ENCODE measurements at regions of chr11 and their contacts with region 1.

Region 1: DNA sequence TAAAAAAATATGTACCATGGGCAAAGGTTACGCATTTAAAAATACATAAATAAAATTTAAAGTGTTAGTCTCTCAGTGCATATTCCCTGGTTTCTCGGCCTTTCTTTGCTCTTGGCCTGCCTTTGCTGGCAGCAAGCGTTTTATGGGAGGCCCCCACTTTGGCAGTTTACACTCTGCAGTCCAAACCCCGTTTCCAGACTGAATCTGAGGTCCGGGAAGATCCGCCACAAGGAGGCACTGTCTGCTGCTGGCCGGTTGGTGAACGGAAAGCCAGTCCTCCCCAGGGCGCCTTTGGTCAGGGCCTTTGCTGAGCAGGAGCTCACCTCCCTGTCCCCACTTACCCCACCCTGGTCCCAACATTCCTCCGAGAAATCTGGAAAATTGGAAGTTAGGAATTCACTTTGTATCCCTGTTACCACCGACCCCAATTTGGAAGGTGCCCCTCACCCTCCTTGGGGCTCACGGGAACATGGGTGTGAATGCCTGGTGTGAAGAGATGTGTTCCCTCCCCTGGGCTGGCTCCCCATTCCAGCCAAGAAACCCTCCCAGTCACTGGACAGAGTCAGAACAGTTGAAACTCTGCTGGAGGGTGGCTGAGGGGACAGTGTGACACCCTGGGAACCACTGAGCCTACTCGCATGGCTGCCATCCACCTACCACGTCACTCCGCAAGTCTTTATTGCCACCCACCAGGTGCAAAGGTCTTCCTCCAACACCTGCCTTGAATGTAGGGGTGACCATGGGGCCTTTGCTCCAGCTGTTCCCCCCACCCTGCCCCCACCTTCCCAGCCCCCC is 9.4 kb upstream of the SF1 start:
- DNase-seq: peak; percentile 43 to 62
- H3K4me3 ChIP-seq: no peak overlapping the region
- H3K27ac ChIP-seq: no peak overlapping the region
- H3K4me1 ChIP-seq: no peaks in the 10 kb centered on the region
- H3K27me3 ChIP-seq: no peaks in the 10 kb centered on the region
- CTCF ChIP-seq: peak; percentile 81

Region 2: GRCh38 chr11:64894070-64894796 is 106.5 kb after region 1 on chr11:
- CTCF ChIA-PET with region 1: no interaction called
- POLR2A ChIA-PET with region 1: no interaction called
- intact Hi-C with region 1: loop called (anchors 2 kb)
- DNase-seq: peak; percentile 53 to 87
- H3K4me3 ChIP-seq: no peak overlapping the region
- H3K27ac ChIP-seq: no peak overlapping the region
- H3K4me1 ChIP-seq: peaks cover 1% of the 10 kb centered on the region; the same call in 1 of the 2 replicates
- H3K27me3 ChIP-seq: no peaks in the 10 kb centered on the region
- CTCF ChIP-seq: peak; percentile 96

Region 3: GRCh38 chr11:65736810-65737209 is 949.1 kb after region 1 on chr11:
- CTCF ChIA-PET with region 1: no interaction called
- POLR2A ChIA-PET with region 1: interaction called, 10 read pairs
- intact Hi-C with region 1: no loop called
- DNase-seq: no peak
- H3K4me3 ChIP-seq: no peak overlapping the region
- H3K27ac ChIP-seq: no peak overlapping the region
- H3K4me1 ChIP-seq: no peaks in the 10 kb centered on the region
- H3K27me3 ChIP-seq: no peaks in the 10 kb centered on the region
- CTCF ChIP-seq: no peak